CD4-positive, alpha-beta T cell (primary cell): ENCODE measurements at regions of chr20 and their contacts with region 1.

Region 1: DNA sequence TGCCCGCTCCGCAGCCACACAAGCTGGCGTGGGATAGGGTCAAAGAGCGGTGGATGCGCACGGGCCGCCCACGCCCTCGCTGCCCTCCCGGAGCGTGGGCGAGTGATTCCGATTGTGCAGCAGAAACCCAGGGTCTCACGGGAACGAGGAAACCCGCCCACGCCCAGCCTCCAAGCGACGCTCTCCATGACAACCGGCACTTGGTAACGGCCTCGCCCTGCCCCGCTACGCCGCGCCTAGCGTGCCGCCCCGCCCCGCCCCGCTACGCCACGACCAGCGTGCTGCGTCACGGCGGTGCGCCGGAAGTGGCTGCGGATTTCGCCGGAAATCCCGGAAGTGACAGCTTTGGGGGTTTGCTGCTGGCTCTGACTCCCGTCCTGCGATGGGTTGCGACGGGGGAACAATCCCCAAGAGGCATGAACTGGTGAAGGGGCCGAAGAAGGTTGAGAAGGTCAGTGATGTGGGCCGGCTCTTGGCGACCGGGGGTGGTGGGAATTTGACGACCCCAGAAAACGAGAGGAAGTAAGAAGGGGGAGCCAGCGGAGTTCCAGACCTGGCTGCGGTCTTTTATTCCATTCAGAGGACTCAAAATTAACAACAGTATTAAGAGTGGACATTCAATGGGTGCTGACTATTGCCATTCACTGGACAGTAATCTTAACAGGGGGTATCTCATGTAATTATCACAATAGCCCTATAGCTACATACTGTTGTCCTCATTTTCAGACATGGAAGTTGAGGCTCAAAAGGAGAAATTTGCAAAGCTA is at the start of gene RTF2:
- DNase-seq: peak; percentile 91 to 98 (median 94)
- ATAC-seq: peak; percentile 97
- H3K4me3 ChIP-seq: peak within 1 kb of the TSS; percentile 91
- H3K4me3 Mint-ChIP-seq: peak within 1 kb of the TSS; percentile 99
- H3K27ac ChIP-seq: peak within 1 kb of the TSS; percentile 90 to 93
- H3K27ac Mint-ChIP-seq: peak within 1 kb of the TSS; percentile 98
- H3K4me1 ChIP-seq: peaks cover 38% of the 10 kb centered on the region
- H3K4me1 Mint-ChIP-seq: peaks cover 43% of the 10 kb centered on the region
- H3K27me3 ChIP-seq: no peaks in the 10 kb centered on the region
- H3K27me3 Mint-ChIP-seq: no peaks in the 10 kb centered on the region
- CTCF ChIP-seq: no peak
- total RNA-seq, gene RTF2: 52.7 to 55.2 TPM

Region 2: DNA sequence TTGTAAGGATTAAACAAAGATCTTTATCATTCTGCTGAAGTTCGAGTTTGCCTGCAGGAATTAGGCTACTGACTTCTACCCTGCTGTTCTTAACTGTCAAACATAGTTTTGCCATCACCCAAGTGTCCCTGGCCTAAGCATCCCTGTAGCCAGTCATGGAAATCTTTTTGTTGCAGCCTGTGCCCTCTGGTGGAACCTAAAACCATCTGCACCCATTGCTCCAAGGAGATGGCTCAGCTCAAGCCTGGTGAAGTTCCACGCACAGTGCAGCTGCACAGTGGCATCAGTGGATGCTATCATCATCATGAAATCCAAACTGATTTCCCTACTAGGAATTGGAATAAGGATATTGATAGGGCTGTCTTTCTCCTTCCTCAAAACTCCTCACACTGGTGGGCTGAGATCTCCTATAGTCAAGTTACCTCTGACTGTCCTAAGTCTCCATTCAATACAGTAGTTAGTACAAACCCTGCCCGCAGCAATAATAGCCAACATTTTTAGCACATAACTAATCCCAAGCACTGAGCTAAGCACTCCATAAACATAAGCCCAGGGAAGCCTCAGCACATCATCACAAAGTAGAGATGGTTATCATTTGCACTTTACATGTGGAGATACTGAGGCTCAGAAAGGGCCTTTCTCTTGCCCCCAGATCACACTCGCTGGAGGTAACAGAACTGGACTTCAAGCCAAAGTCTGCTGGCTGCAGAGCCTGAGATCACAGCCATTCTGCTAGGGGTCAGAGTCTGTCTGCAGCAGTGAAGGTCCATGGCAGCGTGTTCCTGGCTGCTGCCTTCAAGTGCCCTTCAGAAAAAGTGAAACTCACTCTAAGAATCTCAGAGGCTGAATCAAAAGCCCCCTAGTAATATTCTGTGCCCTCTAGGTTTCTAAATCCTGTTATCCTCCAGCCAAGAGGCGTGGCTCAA is 297.1 kb before region 1 on chr20:
- CTCF ChIA-PET with region 1: no interaction called
- POLR2A ChIA-PET with region 1: no interaction called
- intact Hi-C with region 1: no loop called
- DNase-seq: no peak
- ATAC-seq: no peak
- H3K4me3 ChIP-seq: no peak overlapping the region
- H3K4me3 Mint-ChIP-seq: no peak overlapping the region
- H3K27ac ChIP-seq: no peak overlapping the region
- H3K27ac Mint-ChIP-seq: no peak overlapping the region
- H3K4me1 ChIP-seq: no peaks in the 10 kb centered on the region
- H3K4me1 Mint-ChIP-seq: no peaks in the 10 kb centered on the region
- H3K27me3 ChIP-seq: no peaks in the 10 kb centered on the region
- H3K27me3 Mint-ChIP-seq: peaks cover 4% of the 10 kb centered on the region
- CTCF ChIP-seq: no peak

Region 3: DNA sequence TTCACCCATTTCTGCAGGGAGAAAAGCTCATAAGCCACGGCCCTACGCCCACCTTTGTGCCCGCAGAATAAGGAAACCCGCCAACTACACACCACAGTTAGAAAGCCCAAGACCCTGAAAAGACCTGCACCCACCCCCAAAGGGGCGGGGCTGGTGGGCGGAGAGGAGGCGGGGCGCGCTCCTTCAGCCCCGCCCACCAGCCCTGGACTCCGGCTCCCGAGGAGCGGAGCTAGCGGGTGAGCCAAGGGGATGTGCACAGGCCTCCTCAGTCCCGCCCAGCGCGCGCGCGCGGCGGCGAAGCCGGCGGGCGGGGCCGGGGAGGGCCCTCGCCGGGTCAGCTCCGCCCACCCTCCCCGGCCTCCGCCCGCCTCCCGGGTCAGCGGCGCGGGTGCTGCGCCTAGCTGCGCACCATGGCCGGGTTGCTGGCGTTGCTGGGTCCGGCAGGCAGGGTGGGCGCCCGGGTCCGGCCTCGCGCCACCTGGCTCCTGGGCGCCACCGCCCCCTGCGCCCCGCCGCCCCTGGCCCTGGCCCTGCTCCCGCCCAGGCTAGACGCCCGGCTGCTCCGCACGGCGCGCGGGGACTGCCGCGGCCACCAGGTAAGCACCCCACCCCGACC is 109.8 kb before region 1 on chr20 and contains the start of gene FAM210B:
- CTCF ChIA-PET with region 1: no interaction called
- POLR2A ChIA-PET with region 1: interaction called, 5 read pairs
- intact Hi-C with region 1: loop called in 1 of 2 experiments (anchors 1 kb)
- DNase-seq: peak; percentile 62 to 93 (median 81)
- ATAC-seq: peak; percentile 99
- H3K4me3 ChIP-seq: peak within 1 kb of the TSS; percentile 86
- H3K4me3 Mint-ChIP-seq: peak within 1 kb of the TSS; percentile 94
- H3K27ac ChIP-seq: no peak within 1 kb of the TSS
- H3K27ac Mint-ChIP-seq: peak within 1 kb of the TSS; percentile 76
- H3K4me1 ChIP-seq: peaks cover 21% of the 10 kb centered on the region
- H3K4me1 Mint-ChIP-seq: peaks cover 29% of the 10 kb centered on the region
- H3K27me3 ChIP-seq: no peaks in the 10 kb centered on the region
- H3K27me3 Mint-ChIP-seq: no peaks in the 10 kb centered on the region
- CTCF ChIP-seq: no peak
- total RNA-seq, gene FAM210B: 14.4 to 14.7 TPM

Region 4: GRCh38 chr20:57133926-57134650 is 665.6 kb after region 1 on chr20:
- CTCF ChIA-PET with region 1: no interaction called
- POLR2A ChIA-PET with region 1: no interaction called
- intact Hi-C with region 1: no loop called
- DNase-seq: no peak
- ATAC-seq: no peak
- H3K4me3 ChIP-seq: no peak overlapping the region
- H3K4me3 Mint-ChIP-seq: no peak overlapping the region
- H3K27ac ChIP-seq: no peak overlapping the region
- H3K27ac Mint-ChIP-seq: no peak overlapping the region
- H3K4me1 ChIP-seq: no peaks in the 10 kb centered on the region
- H3K4me1 Mint-ChIP-seq: no peaks in the 10 kb centered on the region
- H3K27me3 ChIP-seq: peaks cover 0 to 2% of the 10 kb centered on the region in 2 experiments
- H3K27me3 Mint-ChIP-seq: peaks cover 31% of the 10 kb centered on the region
- CTCF ChIP-seq: no peak